ENCODE measurements at regions of chr6 and their contacts with region 1.

Region 1: DNA sequence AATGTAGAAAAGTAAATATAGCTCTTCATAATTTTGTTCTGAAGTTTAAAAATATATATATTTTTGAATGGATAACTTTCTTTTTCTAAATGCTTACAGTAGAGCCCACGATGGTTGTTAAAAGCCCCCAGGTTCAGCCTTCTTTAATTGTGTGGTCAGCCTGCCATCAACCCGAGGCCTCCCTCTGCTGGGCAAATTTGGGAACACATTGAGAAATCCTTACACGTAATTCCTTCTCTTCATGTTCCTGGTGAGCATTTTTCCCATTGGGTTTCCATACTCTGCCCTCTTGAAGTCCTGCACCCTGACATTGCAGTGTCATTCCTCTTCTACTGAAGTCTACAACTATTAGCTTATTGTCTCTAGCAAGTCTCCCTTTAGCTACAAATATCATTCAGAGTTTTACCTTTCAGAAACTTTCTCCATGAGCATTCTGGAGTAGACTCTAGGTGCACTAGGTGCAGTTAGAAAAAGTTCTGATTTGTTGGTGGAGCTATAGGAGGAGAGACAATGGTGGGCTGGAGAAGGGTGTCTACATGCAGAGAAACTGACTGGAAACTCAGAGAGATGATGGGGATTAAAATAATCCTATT is 40.6 kb downstream of the TRIM38 start:
- DNase-seq: peak; percentile 75 to 81 (median 76)
- ATAC-seq: peak; percentile 87
- H3K4me3 ChIP-seq: no peak overlapping the region
- H3K27ac ChIP-seq: no peak overlapping the region
- H3K4me1 ChIP-seq: peaks cover 5 to 10% of the 10 kb centered on the region in 2 experiments; a peak in 4 of 5 replicates
- H3K27me3 ChIP-seq: no peaks in the 10 kb centered on the region
- CTCF ChIP-seq: peak; percentile 77 to 87 (median 87)
- EP300 ChIP-seq: no peak
- POLR2A ChIP-seq: no peak
- RAD21 ChIP-seq: peak; percentile 64 to 77

Region 2: GRCh38 chr6:25788305-25788922 is 214.8 kb before region 1 on chr6:
- CTCF ChIA-PET with region 1: interaction called, 7 read pairs
- POLR2A ChIA-PET with region 1: no interaction called
- in situ Hi-C with region 1: no loop called
- intact Hi-C with region 1: loop called (anchors 1 kb)
- DNase-seq: peak; percentile 51 to 73 (median 61)
- ATAC-seq: peak; percentile 99
- H3K4me3 ChIP-seq: no peak overlapping the region
- H3K27ac ChIP-seq: no peak overlapping the region; the same call in 2 of the 3 replicates
- H3K4me1 ChIP-seq: no peaks in the 10 kb centered on the region
- H3K27me3 ChIP-seq: no peaks in the 10 kb centered on the region; a peak in 1 of 5 replicates
- CTCF ChIP-seq: peak; percentile 77 to 89 (median 77)
- EP300 ChIP-seq: no peak
- POLR2A ChIP-seq: no peak
- RAD21 ChIP-seq: peak; percentile 83 to 87

Region 3: GRCh38 chr6:26103141-26103769 is 100.1 kb after region 1 on chr6:
- CTCF ChIA-PET with region 1: no interaction called
- POLR2A ChIA-PET with region 1: no interaction called
- in situ Hi-C with region 1: no loop called
- intact Hi-C with region 1: no loop called
- DNase-seq: peak in 1 of 4 experiments; percentile 40
- ATAC-seq: peak; percentile 91
- H3K4me3 ChIP-seq: peak overlapping the region; percentile 6; the same call in 1 of the 2 replicates
- H3K27ac ChIP-seq: peak overlapping the region; percentile 92
- H3K4me1 ChIP-seq: peaks cover 3 to 20% of the 10 kb centered on the region in 2 experiments; a peak in 3 of 5 replicates
- H3K27me3 ChIP-seq: no peaks in the 10 kb centered on the region
- CTCF ChIP-seq: no peak
- EP300 ChIP-seq: no peak
- POLR2A ChIP-seq: no peak
- RAD21 ChIP-seq: no peak